ENCODE measurements at regions of chr17 and their contacts with region 1.

Region 1: DNA sequence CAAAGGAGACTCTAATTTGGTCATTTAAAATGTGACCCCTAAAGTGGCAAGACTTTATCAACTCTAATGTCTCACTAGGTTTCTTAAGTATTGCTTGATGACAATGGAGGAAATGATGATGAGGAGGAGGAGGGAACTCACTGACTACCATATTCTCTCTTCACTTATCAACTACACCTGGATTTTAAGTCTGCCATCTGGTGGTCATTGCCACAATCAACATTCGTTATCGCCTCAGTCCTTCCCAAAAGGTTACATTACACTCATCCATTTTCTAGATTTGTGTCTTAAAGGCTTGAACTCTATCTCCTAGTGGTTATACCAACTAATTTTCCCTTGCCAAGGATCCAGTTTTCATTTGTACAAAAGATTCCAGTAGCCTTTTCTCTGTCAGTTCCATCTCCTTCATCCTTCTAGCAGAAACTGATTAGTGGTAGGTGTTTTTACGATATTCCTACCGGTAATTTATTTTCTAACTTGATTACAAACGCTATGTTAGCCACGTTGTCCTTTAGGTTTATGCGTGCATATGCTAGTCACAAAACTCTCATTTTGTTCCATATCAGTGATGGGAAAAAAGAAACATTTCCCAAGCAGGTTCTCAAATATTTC is 114.6 kb upstream of the NOG start:
- DNase-seq: peak; percentile 39
- H3K4me3 Mint-ChIP-seq: no peak overlapping the region
- H3K27ac Mint-ChIP-seq: no peak overlapping the region
- H3K4me1 Mint-ChIP-seq: peaks cover 7% of the 10 kb centered on the region
- H3K27me3 Mint-ChIP-seq: peaks cover 2% of the 10 kb centered on the region

Region 2: DNA sequence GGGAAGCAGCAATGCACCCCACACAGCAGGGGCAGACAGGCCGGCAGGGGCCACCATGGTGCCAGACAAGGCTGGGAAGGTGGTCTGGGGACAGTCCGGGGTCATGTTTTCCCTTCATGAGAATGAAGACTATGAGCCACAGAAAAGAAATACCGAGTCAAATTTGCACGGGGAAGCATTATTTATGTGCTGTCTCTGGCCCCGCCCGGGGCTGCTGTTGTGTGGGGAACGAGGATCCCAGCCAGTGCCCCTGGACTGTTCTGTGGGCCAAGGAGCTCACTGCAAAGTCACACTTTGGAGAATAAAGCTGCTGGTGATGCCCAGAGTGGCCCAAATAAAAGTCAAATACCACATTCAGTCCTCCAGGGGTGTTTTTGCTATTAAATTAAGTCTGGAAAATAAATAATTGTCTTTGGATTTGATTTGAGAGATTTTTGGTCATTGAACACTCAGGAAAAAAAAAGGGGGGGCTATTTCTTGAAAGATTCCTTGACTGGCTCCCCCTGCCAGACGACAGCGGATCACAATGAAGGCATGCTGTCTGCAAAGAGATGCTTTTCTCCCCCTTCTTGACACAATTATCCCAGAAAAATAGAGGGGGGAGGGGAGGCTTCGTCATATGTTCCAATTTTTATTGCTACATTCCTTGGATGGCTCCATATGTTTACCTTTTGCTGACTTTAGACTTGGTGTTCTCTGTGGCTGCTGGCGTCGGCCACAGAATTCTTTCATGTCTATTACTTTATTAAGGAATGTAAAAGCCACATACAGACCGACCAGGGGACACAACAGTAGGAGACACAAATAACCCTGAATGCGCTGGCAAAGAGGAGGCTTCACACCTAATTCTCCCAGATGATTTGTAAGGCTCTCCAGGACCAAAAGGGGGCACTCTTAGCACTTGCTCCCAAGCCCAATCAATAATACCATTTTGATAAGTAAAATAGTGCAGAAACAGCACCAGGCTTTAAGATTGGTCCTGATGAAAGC is 352.8 kb before region 1 on chr17:
- CTCF ChIA-PET with region 1: interaction called, 3 read pairs
- intact Hi-C with region 1: loop called (anchors 1 kb)
- DNase-seq: peak; percentile 30
- H3K4me3 Mint-ChIP-seq: no peak overlapping the region
- H3K27ac Mint-ChIP-seq: no peak overlapping the region
- H3K4me1 Mint-ChIP-seq: no peaks in the 10 kb centered on the region
- H3K27me3 Mint-ChIP-seq: peaks cover 3% of the 10 kb centered on the region

Region 3: GRCh38 chr17:56424543-56425044 is 54.3 kb before region 1 on chr17:
- CTCF ChIA-PET with region 1: interaction called, 3 read pairs
- intact Hi-C with region 1: loop called (anchors 5 kb)
- DNase-seq: peak; percentile 15
- H3K4me3 Mint-ChIP-seq: no peak overlapping the region
- H3K27ac Mint-ChIP-seq: no peak overlapping the region
- H3K4me1 Mint-ChIP-seq: peaks cover 18% of the 10 kb centered on the region
- H3K27me3 Mint-ChIP-seq: peaks cover 14% of the 10 kb centered on the region

Region 4: GRCh38 chr17:56499799-56500388 is 21.0 kb after region 1 on chr17:
- CTCF ChIA-PET with region 1: interaction called, 10 read pairs
- intact Hi-C with region 1: no loop called
- DNase-seq: peak; percentile 64
- H3K4me3 Mint-ChIP-seq: no peak overlapping the region
- H3K27ac Mint-ChIP-seq: no peak overlapping the region
- H3K4me1 Mint-ChIP-seq: no peaks in the 10 kb centered on the region
- H3K27me3 Mint-ChIP-seq: no peaks in the 10 kb centered on the region

Region 5: GRCh38 chr17:56891784-56892183 is 412.8 kb after region 1 on chr17:
- CTCF ChIA-PET with region 1: no interaction called
- intact Hi-C with region 1: no loop called
- DNase-seq: peak; percentile 59
- H3K4me3 Mint-ChIP-seq: no peak overlapping the region
- H3K27ac Mint-ChIP-seq: no peak overlapping the region
- H3K4me1 Mint-ChIP-seq: no peaks in the 10 kb centered on the region
- H3K27me3 Mint-ChIP-seq: no peaks in the 10 kb centered on the region

Measured in activated naive CD4-positive, alpha-beta T cell treated with anti-CD3 and anti-CD28 coated beads for 36 hours (primary cell).